Mammary epithelial cell (primary cell): ENCODE measurements at regions of chr2 and their contacts with region 1.

Region 1: GRCh38 chr2:95402370-95403203 is at the start of gene FAHD2A:
- DNase-seq: peak; percentile 85
- H3K4me3 ChIP-seq: peak within 1 kb of the TSS; percentile 93 to 99 (median 96)
- H3K27ac ChIP-seq: peak within 1 kb of the TSS; percentile 75
- H3K4me1 ChIP-seq: peaks cover 10% of the 10 kb centered on the region
- H3K27me3 ChIP-seq: no peaks in the 10 kb centered on the region
- CTCF ChIP-seq: no peak
- total RNA-seq, gene FAHD2A: 23.8 to 26.8 TPM

Region 2: GRCh38 chr2:95323347-95324185 is 79.0 kb before region 1 on chr2:
- CTCF ChIA-PET with region 1: no interaction called
- dilution Hi-C with region 1: no loop called
- in situ Hi-C with region 1: no loop called
- intact Hi-C with region 1: loop called (anchors 1 kb)
- DNase-seq: peak; percentile 64
- H3K4me3 ChIP-seq: no peak overlapping the region
- H3K27ac ChIP-seq: no peak overlapping the region
- H3K4me1 ChIP-seq: no peaks in the 10 kb centered on the region
- H3K27me3 ChIP-seq: no peaks in the 10 kb centered on the region
- CTCF ChIP-seq: peak; percentile 76 to 91

Region 3: DNA sequence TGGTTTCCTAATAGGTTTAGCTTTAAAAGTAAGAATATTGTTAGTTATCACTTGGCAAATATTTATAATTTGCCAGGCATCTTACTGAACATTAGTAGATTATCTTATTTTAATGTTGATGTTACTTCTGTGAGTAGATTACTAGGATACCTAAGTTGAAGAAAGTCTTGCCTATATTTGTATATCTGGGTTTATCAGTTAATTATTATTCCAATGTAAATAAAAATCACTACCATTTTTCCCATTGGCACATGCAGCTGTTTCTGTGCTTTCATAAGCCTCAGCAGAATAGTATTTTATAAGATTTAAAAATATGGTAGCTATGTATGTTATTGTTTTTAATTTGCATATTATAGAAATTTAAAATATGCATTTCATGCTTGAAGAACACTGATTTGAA is 98.3 kb after region 1 on chr2:
- CTCF ChIA-PET with region 1: no interaction called
- dilution Hi-C with region 1: no loop called
- in situ Hi-C with region 1: no loop called
- intact Hi-C with region 1: no loop called
- DNase-seq: no peak
- H3K4me3 ChIP-seq: no peak overlapping the region
- H3K27ac ChIP-seq: no peak overlapping the region
- H3K4me1 ChIP-seq: no peaks in the 10 kb centered on the region
- H3K27me3 ChIP-seq: peaks cover 2% of the 10 kb centered on the region
- CTCF ChIP-seq: no peak